ENCODE measurements at regions of chr6 and their contacts with region 1.

Region 1: DNA sequence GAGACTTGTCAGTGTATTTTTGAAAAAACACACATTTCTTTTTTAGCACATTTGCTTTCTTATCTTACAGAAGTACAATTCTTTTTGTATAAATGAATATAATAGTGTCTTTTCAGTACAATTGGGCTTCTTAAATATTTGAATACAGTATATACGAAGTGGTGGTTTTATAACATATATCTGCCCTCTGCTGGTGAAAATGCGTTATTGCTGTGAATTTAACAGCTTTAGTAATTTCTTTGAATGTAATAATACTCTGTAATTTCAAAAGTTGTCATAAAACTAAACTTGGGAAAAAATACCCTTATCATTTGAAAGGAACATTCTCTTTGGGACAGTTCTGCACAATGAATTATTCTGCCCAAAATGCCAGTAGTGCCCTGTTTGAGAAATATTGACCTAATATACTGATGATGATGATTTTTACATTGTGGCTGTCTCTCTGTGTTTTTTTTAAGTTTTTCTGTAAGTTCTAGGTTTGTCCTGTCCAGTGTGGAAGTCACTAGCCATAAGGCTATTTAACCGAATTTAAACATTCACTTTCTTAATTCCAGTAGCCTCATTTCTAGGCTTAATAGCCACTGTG is 19.0 kb downstream of the SMAP1 start:
- DNase-seq: no peak
- ATAC-seq: peak; percentile 75
- H3K4me3 ChIP-seq: no peak overlapping the region
- H3K27ac ChIP-seq: no peak overlapping the region
- H3K4me1 ChIP-seq: no peaks in the 10 kb centered on the region
- H3K27me3 ChIP-seq: no peaks in the 10 kb centered on the region
- CTCF ChIP-seq: peak; percentile 33 to 66 (median 60); a peak in 5 of 6 replicates
- EP300 ChIP-seq: no peak
- POLR2A ChIP-seq: no peak
- RAD21 ChIP-seq: peak; percentile 63

Region 2: GRCh38 chr6:70369332-70369950 is 317.2 kb before region 1 on chr6:
- CTCF ChIA-PET with region 1: interaction called, 56 read pairs
- POLR2A ChIA-PET with region 1: no interaction called
- RAD21 ChIA-PET with region 1: interaction called, 20 read pairs
- SMC1A ChIA-PET with region 1: interaction called, 16 read pairs
- in situ Hi-C with region 1: no loop called
- intact Hi-C with region 1: loop called (anchors 2 kb)
- DNase-seq: peak; percentile 21
- ATAC-seq: peak; percentile 96
- H3K4me3 ChIP-seq: no peak overlapping the region
- H3K27ac ChIP-seq: no peak overlapping the region
- H3K4me1 ChIP-seq: no peaks in the 10 kb centered on the region
- H3K27me3 ChIP-seq: no peaks in the 10 kb centered on the region; a peak in 3 of 4 replicates
- CTCF ChIP-seq: peak; percentile 90 to 93 (median 90)
- EP300 ChIP-seq: no peak
- POLR2A ChIP-seq: no peak
- RAD21 ChIP-seq: peak; percentile 86

Region 3: GRCh38 chr6:70531133-70531532 is 155.5 kb before region 1 on chr6:
- CTCF ChIA-PET with region 1: interaction called, 163 read pairs
- POLR2A ChIA-PET with region 1: no interaction called
- RAD21 ChIA-PET with region 1: interaction called, 4 read pairs
- SMC1A ChIA-PET with region 1: interaction called, 6 read pairs
- in situ Hi-C with region 1: no loop called
- intact Hi-C with region 1: no loop called
- DNase-seq: peak; percentile 4
- ATAC-seq: peak; percentile 83
- H3K4me3 ChIP-seq: no peak overlapping the region
- H3K27ac ChIP-seq: no peak overlapping the region
- H3K4me1 ChIP-seq: no peaks in the 10 kb centered on the region
- H3K27me3 ChIP-seq: no peaks in the 10 kb centered on the region
- CTCF ChIP-seq: no peak
- EP300 ChIP-seq: peak in 1 of 2 experiments; percentile 48; a peak in 1 of 4 replicates
- POLR2A ChIP-seq: no peak
- RAD21 ChIP-seq: no peak

Region 4: GRCh38 chr6:70667711-70668498 is 18.7 kb before region 1 on chr6 and contains the start of gene SMAP1:
- CTCF ChIA-PET with region 1: interaction called, 38 read pairs
- POLR2A ChIA-PET with region 1: no interaction called
- RAD21 ChIA-PET with region 1: interaction called, 13 read pairs
- SMC1A ChIA-PET with region 1: interaction called, 40 read pairs
- in situ Hi-C with region 1: no loop called
- intact Hi-C with region 1: loop called (anchors 2 kb)
- DNase-seq: peak; percentile 72
- ATAC-seq: peak; percentile 93
- H3K4me3 ChIP-seq: peak within 1 kb of the TSS; percentile 94
- H3K27ac ChIP-seq: peak within 1 kb of the TSS; percentile 81
- H3K4me1 ChIP-seq: peaks cover 4% of the 10 kb centered on the region; the same call in 1 of the 2 replicates
- H3K27me3 ChIP-seq: no peaks in the 10 kb centered on the region
- CTCF ChIP-seq: no peak
- EP300 ChIP-seq: peak in 1 of 2 experiments; percentile 15; a peak in 2 of 4 replicates
- POLR2A ChIP-seq: peak; percentile 95
- RAD21 ChIP-seq: no peak
- polyA plus RNA-seq, gene SMAP1: 13.7 to 15.1 TPM

Region 5: GRCh38 chr6:70706491-70707123 is 20.0 kb after region 1 on chr6:
- CTCF ChIA-PET with region 1: interaction called, 29 read pairs
- POLR2A ChIA-PET with region 1: no interaction called
- RAD21 ChIA-PET with region 1: interaction called, 10 read pairs
- SMC1A ChIA-PET with region 1: interaction called, 5 read pairs
- in situ Hi-C with region 1: no loop called
- intact Hi-C with region 1: no loop called
- DNase-seq: no peak
- ATAC-seq: peak; percentile 43
- H3K4me3 ChIP-seq: no peak overlapping the region
- H3K27ac ChIP-seq: no peak overlapping the region
- H3K4me1 ChIP-seq: peaks cover 6% of the 10 kb centered on the region; the same call in 1 of the 2 replicates
- H3K27me3 ChIP-seq: no peaks in the 10 kb centered on the region
- CTCF ChIP-seq: peak; percentile 13 to 55 (median 44); a peak in 4 of 6 replicates
- EP300 ChIP-seq: no peak
- POLR2A ChIP-seq: no peak
- RAD21 ChIP-seq: peak; percentile 74

Region 6: GRCh38 chr6:70717038-70717801 is 30.6 kb after region 1 on chr6:
- CTCF ChIA-PET with region 1: no interaction called
- POLR2A ChIA-PET with region 1: no interaction called
- RAD21 ChIA-PET with region 1: no interaction called
- SMC1A ChIA-PET with region 1: no interaction called
- in situ Hi-C with region 1: no loop called
- intact Hi-C with region 1: no loop called
- DNase-seq: no peak
- ATAC-seq: peak; percentile 85
- H3K4me3 ChIP-seq: no peak overlapping the region
- H3K27ac ChIP-seq: no peak overlapping the region
- H3K4me1 ChIP-seq: peaks cover 13% of the 10 kb centered on the region; the same call in 1 of the 2 replicates
- H3K27me3 ChIP-seq: no peaks in the 10 kb centered on the region
- CTCF ChIP-seq: no peak
- EP300 ChIP-seq: no peak
- POLR2A ChIP-seq: no peak
- RAD21 ChIP-seq: no peak

Region 7: GRCh38 chr6:70863343-70863742 is 176.7 kb after region 1 on chr6:
- CTCF ChIA-PET with region 1: no interaction called
- POLR2A ChIA-PET with region 1: no interaction called
- RAD21 ChIA-PET with region 1: no interaction called
- SMC1A ChIA-PET with region 1: no interaction called
- in situ Hi-C with region 1: no loop called
- intact Hi-C with region 1: no loop called
- DNase-seq: no peak
- ATAC-seq: peak; percentile 61
- H3K4me3 ChIP-seq: no peak overlapping the region
- H3K27ac ChIP-seq: no peak overlapping the region
- H3K4me1 ChIP-seq: no peaks in the 10 kb centered on the region
- H3K27me3 ChIP-seq: no peaks in the 10 kb centered on the region
- CTCF ChIP-seq: no peak
- EP300 ChIP-seq: no peak
- POLR2A ChIP-seq: no peak
- RAD21 ChIP-seq: no peak

Measured in GM12878 (cell line).